Activated CD4-positive, alpha-beta T cell treated with anti-CD3 and anti-CD28 coated beads for 36 hours (primary cell): ENCODE measurements at regions of chr15 and their contacts with region 1.

Region 1: DNA sequence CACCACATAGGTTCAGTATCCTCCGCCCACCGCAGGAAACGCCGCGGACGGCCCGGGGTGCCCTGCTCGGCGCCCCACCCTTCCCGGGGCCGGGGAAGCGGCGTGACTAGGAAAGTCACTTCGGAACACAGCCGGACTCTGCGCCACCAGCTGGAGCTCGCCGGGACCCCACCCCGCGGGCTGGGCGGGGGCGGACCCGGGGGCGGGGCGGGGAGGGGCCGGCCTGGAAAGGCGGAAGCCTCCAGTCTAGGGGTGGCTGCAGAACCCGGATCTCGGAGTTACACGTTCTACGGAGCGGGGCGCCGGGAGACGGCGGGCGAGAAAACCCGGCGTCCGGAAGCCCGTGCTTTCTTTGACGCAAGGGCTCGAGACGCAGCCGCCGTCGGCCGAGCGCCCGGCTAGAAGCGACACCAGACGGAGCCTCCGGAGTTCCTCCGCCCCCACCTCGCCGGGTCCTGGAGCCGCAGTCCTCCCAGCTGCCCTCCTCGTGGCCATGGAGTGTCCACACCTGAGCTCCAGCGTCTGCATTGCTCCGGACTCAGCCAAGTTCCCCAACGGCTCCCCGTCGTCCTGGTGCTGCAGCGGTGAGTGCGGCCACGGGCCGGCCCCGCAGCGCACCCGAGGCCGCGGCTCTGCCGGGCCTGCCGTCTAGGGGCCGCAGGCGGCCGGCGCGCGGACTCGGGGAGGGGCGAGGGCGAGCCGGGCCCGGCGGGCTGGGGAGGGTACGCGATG is at the start of gene USP3:
- DNase-seq: peak; percentile 96
- ATAC-seq: peak; percentile 53
- H3K4me3 Mint-ChIP-seq: peak within 1 kb of the TSS; percentile 94
- H3K27ac Mint-ChIP-seq: peak within 1 kb of the TSS; percentile 97
- H3K4me1 Mint-ChIP-seq: peaks cover 74% of the 10 kb centered on the region
- H3K27me3 Mint-ChIP-seq: no peaks in the 10 kb centered on the region
- total RNA-seq, gene USP3: 51.1 to 51.7 TPM

Region 2: DNA sequence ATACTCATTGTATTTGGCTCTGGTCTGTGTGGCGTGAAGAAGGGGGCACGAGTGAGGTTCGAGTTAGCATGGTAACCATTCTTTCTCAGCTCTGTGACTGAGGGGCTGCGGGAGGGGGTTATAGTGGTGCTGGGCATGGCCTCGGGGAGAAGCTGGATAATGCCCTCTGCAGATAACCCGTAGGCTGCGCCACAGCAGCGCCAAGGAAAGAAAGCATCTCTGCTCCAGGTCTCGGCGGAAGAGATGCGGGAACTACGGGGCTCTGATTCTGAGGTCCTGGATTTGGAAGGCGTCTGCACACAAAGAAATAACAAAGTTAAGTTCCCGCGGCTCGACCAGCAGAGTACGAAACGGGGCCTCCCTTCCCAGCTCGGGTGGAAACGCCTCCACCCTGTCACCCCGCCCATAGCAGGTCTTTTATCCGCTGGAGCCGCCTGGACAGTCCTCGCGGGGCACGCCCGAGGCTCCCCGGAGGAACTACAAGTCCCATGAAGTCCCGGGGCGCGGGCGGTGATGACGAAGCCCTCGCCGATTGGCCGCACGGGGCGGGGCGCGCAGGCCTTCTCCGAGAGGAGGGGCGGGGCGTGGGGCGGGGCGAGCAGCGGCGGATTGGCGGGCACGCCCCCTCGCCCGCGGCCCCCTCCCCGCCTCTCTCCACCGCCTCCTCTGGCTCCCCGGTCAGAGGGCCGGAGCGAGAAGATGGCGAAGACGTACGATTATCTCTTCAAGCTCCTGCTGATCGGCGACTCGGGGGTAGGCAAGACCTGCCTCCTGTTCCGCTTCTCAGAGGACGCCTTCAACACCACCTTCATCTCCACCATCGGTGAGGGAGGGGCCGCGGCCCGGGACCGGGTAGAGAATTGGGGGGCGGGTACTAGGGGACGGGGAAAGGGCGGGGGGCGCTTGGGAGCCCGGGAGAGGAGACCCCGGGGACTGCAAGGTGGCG is 315.2 kb before region 1 on chr15 and contains the start of gene RAB8B:
- CTCF ChIA-PET with region 1: no interaction called
- POLR2A ChIA-PET with region 1: interaction called, 3 read pairs
- intact Hi-C with region 1: loop called (anchors 2 to 5 kb)
- DNase-seq: peak; percentile 100
- ATAC-seq: peak; percentile 76
- H3K4me3 Mint-ChIP-seq: peak within 1 kb of the TSS; percentile 99
- H3K27ac Mint-ChIP-seq: peak within 1 kb of the TSS; percentile 97
- H3K4me1 Mint-ChIP-seq: peaks cover 39% of the 10 kb centered on the region
- H3K27me3 Mint-ChIP-seq: no peaks in the 10 kb centered on the region
- total RNA-seq, gene RAB8B: 147 to 260 TPM

Region 3: GRCh38 chr15:63466378-63467192 is 37.8 kb before region 1 on chr15:
- CTCF ChIA-PET with region 1: interaction called, 12 read pairs
- POLR2A ChIA-PET with region 1: interaction called, 6 read pairs
- intact Hi-C with region 1: loop called (anchors 1 to 5 kb)
- DNase-seq: peak; percentile 62
- ATAC-seq: peak; percentile 78
- H3K4me3 Mint-ChIP-seq: no peak overlapping the region
- H3K27ac Mint-ChIP-seq: no peak overlapping the region
- H3K4me1 Mint-ChIP-seq: peaks cover 26% of the 10 kb centered on the region
- H3K27me3 Mint-ChIP-seq: no peaks in the 10 kb centered on the region

Region 4: DNA sequence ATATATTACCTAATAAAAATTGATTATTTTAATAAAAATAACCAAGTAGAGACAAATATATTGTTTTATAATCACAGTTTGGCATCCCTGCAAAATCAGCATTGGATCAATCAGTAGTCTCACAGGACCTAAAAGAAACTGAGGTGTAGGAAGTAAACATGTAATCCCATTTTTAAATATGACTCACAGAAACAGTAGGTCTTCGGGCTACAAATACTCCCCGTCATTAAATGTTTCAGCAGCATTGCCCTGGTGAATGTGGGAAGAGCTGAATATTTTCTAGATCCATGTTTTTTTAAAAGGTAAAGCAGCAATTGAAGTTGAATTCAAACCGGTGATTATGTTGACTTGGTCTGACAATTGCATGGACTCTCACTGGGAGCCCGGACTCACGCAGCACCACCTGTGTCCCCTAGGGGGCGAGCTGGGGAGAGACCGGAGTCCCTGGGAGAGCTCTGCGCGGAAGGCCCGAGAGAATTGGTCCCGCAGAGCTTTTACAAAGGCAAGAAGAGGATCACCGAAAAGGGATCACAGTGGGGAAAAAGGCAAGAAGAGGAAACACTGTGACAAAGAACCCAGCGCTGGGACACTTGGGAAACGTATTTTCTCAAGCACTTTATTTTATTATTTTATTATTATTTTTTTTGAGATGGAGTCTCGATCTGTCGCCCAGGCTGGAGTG is 17.2 kb before region 1 on chr15:
- CTCF ChIA-PET with region 1: interaction called, 78 read pairs
- POLR2A ChIA-PET with region 1: interaction called, 5 read pairs
- intact Hi-C with region 1: loop called (anchors 1 to 2 kb)
- DNase-seq: peak; percentile 94
- ATAC-seq: peak; percentile 89
- H3K4me3 Mint-ChIP-seq: peak overlapping the region; percentile 15
- H3K27ac Mint-ChIP-seq: peak overlapping the region; percentile 7
- H3K4me1 Mint-ChIP-seq: peaks cover 61% of the 10 kb centered on the region
- H3K27me3 Mint-ChIP-seq: no peaks in the 10 kb centered on the region

Region 5: DNA sequence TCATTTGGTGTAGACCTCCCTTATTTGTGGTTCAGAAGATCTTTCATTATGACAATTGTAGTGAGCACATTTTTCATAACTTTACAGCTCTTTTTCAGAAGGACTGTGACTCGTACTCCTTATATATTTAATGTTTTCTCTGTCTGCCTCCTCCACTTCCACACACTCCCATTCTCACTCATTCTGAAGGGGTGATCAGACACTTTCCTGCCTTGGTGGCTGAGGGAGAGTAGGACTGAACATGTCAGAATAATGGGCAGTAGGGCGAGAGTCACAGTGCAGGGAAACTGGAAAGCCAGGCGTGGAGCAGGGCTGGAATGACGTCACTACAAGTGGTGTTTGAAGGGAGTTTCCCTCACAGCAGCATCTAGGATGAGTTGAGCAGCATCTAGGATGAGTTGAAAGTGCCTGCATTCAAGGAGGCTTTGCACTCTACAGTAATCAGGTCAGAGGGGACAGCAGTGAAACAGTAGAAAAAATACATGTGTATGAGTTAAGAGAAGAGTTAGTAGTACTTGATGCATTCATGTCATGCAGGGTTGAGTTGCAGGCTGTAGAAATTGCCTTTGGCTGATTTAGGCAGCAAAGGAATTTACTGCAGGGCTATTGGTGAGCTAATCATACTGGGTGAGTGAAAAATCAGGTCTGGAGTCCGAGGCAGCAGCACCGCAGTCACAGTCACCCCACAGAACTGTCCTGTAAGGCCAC is 56.5 kb after region 1 on chr15:
- CTCF ChIA-PET with region 1: interaction called, 4 read pairs
- POLR2A ChIA-PET with region 1: interaction called, 7 read pairs
- intact Hi-C with region 1: loop called (anchors 1 to 2 kb)
- DNase-seq: peak; percentile 81
- ATAC-seq: peak; percentile 95
- H3K4me3 Mint-ChIP-seq: no peak overlapping the region
- H3K27ac Mint-ChIP-seq: peak overlapping the region; percentile 74
- H3K4me1 Mint-ChIP-seq: peaks cover 49% of the 10 kb centered on the region
- H3K27me3 Mint-ChIP-seq: no peaks in the 10 kb centered on the region

Region 6: GRCh38 chr15:63833021-63833696 is 328.7 kb after region 1 on chr15:
- CTCF ChIA-PET with region 1: no interaction called
- POLR2A ChIA-PET with region 1: no interaction called
- intact Hi-C with region 1: loop called in 1 of 2 experiments (anchors 1 kb)
- DNase-seq: peak; percentile 64
- ATAC-seq: peak; percentile 50
- H3K4me3 Mint-ChIP-seq: peak overlapping the region; percentile 87
- H3K27ac Mint-ChIP-seq: peak overlapping the region; percentile 91
- H3K4me1 Mint-ChIP-seq: peaks cover 50% of the 10 kb centered on the region
- H3K27me3 Mint-ChIP-seq: no peaks in the 10 kb centered on the region

Region 7: DNA sequence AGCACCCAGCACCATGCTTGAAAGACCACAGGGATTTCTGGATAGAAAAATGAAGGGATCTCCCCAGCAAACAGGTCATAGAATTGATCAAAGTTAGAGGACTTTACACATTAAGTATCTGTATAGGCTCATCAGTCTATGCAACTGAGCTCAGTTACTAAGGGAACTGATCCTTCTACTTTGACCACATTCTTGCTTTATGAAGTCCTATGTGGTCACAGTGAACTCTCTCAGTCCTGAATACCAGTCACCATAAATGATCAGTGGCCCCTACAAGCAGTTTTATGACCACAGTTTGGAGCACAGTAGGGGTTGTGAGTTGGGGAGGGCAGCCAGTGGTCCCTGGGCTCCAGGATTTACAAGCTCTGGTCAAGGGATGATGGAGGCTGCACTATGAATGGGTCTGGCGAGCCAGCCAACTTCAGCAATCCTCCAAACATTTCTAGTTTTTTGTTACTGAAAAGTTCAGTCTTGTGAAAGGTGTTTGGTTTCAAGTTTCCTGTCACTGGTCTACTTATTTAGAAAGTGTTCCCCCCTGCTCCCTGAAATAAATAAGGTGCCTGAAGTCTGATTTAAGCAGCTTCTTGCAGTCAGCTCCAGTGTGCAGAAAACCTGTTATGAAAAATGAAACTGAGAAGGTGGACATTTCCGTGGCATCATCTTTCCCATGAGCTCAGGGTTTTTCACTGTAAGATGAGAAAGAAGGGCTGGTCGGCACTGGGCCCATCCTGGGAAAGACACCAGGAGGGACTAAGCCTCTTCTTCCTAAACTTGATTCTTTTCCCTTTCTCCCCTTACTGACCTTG is 466.4 kb after region 1 on chr15:
- CTCF ChIA-PET with region 1: no interaction called
- POLR2A ChIA-PET with region 1: no interaction called
- intact Hi-C with region 1: no loop called
- DNase-seq: peak; percentile 65
- ATAC-seq: peak; percentile 85
- H3K4me3 Mint-ChIP-seq: no peak overlapping the region
- H3K27ac Mint-ChIP-seq: peak overlapping the region; percentile 97
- H3K4me1 Mint-ChIP-seq: peaks cover 31% of the 10 kb centered on the region
- H3K27me3 Mint-ChIP-seq: no peaks in the 10 kb centered on the region

Region 8: DNA sequence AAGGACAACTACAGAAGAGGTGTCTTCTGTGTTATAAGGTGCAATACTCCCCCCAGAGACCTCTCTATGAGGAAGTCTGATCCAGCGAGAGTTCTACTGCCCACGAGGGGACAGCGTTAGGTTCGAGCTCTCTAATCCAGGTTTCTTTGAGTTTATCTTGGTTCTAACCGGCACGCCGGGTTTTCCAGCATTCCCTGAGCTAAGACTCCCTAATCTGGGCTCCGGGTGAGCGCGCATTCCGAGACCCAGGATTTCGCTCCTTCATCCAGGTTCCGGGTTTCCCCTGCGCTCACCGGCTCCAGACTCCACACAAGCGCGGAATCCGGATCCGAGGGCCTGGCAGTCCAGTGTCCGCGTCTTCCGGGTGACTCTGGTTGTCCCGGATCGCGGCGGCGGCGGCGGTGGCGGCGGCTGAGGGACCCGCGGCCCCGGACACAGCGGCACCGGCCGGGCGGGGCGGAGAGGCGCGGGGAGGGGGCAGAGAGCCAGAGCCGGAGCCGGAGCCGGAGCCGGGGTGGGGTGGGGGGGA is 955.9 kb after region 1 on chr15 and contains the start of gene ZNF609:
- CTCF ChIA-PET with region 1: interaction called, 4 read pairs
- POLR2A ChIA-PET with region 1: no interaction called
- intact Hi-C with region 1: loop called in 1 of 2 experiments (anchors 5 kb)
- DNase-seq: peak; percentile 94
- ATAC-seq: peak; percentile 54
- H3K4me3 Mint-ChIP-seq: peak within 1 kb of the TSS; percentile 83
- H3K27ac Mint-ChIP-seq: peak within 1 kb of the TSS; percentile 92
- H3K4me1 Mint-ChIP-seq: peaks cover 80% of the 10 kb centered on the region
- H3K27me3 Mint-ChIP-seq: no peaks in the 10 kb centered on the region
- total RNA-seq, gene ZNF609: 39.8 to 44.5 TPM